Mammary epithelial cell (primary cell): ENCODE measurements at regions of chr14 and their contacts with region 1.

Region 1: DNA sequence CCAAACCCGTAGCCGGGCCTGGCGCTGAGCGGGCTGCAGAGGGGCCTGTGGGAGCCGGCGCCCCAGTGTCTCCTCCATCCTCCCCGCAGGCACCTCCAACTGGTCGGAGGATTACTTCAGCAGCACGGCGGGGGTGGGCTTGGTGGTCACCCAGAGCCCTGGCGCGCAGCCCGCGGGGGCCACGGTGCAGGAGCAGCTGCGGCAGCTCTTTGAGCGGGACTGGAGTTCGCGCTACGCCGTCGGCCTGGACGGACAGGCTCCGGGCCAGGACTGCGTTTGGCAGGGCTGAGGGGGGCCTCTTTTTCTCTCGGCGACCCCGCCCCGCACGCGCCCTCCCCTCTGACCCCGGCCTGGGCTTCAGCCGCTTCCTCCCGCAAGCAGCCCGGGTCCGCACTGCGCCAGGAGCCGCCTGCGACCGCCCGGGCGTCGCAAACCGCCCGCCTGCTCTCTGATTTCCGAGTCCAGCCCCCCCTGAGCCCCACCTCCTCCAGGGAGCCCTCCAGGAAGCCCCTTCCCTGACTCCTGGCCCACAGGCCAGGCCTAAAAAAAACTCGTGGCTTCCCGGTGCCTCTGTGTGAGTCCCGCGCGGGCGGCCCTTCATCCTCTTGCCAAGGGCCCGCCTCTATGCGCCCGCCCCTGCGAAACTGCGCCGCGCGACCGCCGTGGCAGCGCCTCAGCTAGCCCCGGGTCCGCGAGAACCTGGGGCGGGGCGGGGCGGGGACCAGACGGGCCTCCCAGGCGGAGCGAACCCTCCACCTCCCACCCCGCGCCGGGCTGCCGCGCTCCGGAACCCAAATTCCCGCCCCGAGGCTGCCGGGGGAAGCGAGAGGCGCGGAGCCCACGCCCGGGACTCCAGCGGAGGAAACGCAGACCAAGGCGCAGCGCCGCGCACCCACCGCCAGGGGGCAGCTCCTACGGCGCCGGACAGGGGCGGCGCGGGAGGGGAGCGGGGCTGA is 8.3 kb downstream of the PLD4 start:
- DNase-seq: peak; percentile 68
- H3K4me3 ChIP-seq: peak overlapping the region; percentile 23 to 48 (median 40)
- H3K27ac ChIP-seq: no peak overlapping the region
- H3K4me1 ChIP-seq: peaks cover 6% of the 10 kb centered on the region
- H3K27me3 ChIP-seq: no peaks in the 10 kb centered on the region
- CTCF ChIP-seq: peak; percentile 46 to 72

Region 2: GRCh38 chr14:104895786-104896661 is 36.9 kb before region 1 on chr14:
- CTCF ChIA-PET with region 1: no interaction called
- dilution Hi-C with region 1: loop called (anchors 5 kb)
- in situ Hi-C with region 1: no loop called
- intact Hi-C with region 1: no loop called
- DNase-seq: no peak
- H3K4me3 ChIP-seq: no peak overlapping the region
- H3K27ac ChIP-seq: no peak overlapping the region
- H3K4me1 ChIP-seq: peaks cover 11% of the 10 kb centered on the region
- H3K27me3 ChIP-seq: no peaks in the 10 kb centered on the region
- CTCF ChIP-seq: no peak

Region 3: GRCh38 chr14:104993808-104994591 is 61.0 kb after region 1 on chr14:
- CTCF ChIA-PET with region 1: no interaction called
- dilution Hi-C with region 1: loop called (anchors 5 kb)
- in situ Hi-C with region 1: no loop called
- intact Hi-C with region 1: no loop called
- DNase-seq: no peak
- H3K4me3 ChIP-seq: no peak overlapping the region
- H3K27ac ChIP-seq: no peak overlapping the region
- H3K4me1 ChIP-seq: no peaks in the 10 kb centered on the region
- H3K27me3 ChIP-seq: no peaks in the 10 kb centered on the region
- CTCF ChIP-seq: no peak

Region 4: DNA sequence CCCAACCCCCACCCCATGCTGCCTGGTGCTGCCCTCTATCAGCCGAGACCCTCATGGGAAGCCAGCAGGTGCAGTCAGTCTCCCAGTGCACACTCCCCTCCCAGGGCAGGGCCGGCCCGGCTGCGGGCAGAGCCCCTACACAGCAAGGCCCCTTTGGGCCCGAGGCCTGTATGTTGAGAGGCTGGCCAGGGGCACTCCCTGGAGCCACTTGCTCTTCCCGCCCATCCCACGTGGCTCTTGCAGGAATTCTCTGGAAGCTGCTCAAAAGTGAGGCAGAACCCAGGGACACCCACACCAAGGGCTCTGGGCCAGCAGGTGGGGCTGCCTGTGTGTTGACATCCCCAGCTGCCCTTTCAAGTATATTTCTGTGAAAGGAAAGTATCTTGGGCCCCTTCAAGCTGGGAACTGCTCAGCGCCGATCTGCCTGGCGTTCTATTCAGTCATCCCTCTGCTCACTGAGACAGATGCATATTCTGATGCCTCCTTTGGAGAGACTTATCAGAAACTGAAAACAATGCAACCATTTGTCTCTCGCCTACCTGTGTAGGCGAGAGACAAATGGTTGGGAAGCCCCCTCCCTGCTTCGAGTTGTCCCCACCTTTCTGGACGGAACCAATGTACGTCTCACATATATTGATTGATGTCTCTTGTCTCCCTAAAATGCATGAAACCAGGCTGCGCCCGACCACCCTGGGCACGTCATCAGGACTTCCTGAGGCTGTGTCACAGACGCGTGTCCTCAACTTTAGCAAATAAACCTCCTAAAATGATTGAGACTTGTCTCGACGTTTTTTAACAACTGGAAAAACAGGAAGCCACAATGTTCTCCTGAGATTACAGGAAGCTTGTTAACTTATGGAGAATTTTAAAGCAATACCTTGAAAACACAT is 126.3 kb after region 1 on chr14:
- CTCF ChIA-PET with region 1: no interaction called
- dilution Hi-C with region 1: loop called (anchors 5 kb)
- in situ Hi-C with region 1: no loop called
- intact Hi-C with region 1: no loop called
- DNase-seq: no peak
- H3K4me3 ChIP-seq: no peak overlapping the region
- H3K27ac ChIP-seq: no peak overlapping the region
- H3K4me1 ChIP-seq: no peaks in the 10 kb centered on the region
- H3K27me3 ChIP-seq: peaks cover 2% of the 10 kb centered on the region
- CTCF ChIP-seq: no peak